Activated B cell treated with CpG ODN at 0.5 μM for 24 hours (primary cell): ENCODE measurements at regions of chr19 and their contacts with region 1.

Region 1: DNA sequence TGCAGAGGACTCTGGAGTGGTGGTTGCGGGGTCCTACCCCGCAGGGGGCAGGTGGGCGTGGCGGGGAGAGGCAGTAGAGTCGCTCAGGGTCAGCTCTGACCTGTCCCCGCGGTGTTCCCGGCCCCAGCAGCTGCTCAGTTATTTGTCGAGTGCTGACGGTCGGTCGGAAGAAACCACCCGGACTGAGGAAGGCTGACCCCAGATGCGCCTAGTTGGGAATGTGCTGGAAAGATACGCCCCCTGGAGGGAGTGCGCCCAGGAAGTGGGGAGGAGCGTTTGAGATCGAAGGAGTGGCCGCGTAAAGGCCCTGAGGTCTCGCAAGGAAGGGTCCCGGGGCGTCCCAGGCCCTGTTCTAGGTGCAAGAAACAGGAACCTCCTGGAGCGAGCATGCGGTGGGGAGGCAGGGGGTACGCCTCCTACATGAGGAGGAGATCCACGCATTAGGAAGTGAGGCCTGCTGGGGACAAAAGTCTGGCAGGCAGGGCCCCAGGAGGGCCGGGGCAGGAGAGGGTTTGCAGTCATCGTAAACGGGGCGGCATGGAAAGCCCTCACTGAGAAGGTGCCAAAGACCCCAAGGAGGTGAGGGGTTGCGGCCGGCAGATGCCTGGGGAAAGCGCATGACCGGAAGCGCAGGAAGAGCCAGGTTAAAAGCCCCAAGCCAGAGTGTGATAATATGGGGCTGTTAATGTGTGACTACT is 9.2 kb downstream of the CCDC8 start:
- DNase-seq: no peak
- ATAC-seq: no peak
- H3K4me3 Mint-ChIP-seq: peak overlapping the region; percentile 45
- H3K27ac Mint-ChIP-seq: no peak overlapping the region
- H3K4me1 Mint-ChIP-seq: peaks cover 15% of the 10 kb centered on the region
- H3K27me3 Mint-ChIP-seq: peaks cover 53% of the 10 kb centered on the region
- CTCF ChIP-seq: no peak

Region 2: GRCh38 chr19:46076951-46077816 is 327.0 kb before region 1 on chr19:
- CTCF ChIA-PET with region 1: no interaction called
- POLR2A ChIA-PET with region 1: no interaction called
- intact Hi-C with region 1: no loop called
- DNase-seq: no peak
- ATAC-seq: no peak
- H3K4me3 Mint-ChIP-seq: no peak overlapping the region
- H3K27ac Mint-ChIP-seq: no peak overlapping the region
- H3K4me1 Mint-ChIP-seq: no peaks in the 10 kb centered on the region
- H3K27me3 Mint-ChIP-seq: peaks cover 68% of the 10 kb centered on the region
- CTCF ChIP-seq: no peak

Region 3: GRCh38 chr19:46254776-46255175 is 149.4 kb before region 1 on chr19:
- CTCF ChIA-PET with region 1: no interaction called
- POLR2A ChIA-PET with region 1: no interaction called
- intact Hi-C with region 1: no loop called
- DNase-seq: no peak
- ATAC-seq: no peak
- H3K4me3 Mint-ChIP-seq: no peak overlapping the region
- H3K27ac Mint-ChIP-seq: no peak overlapping the region
- H3K4me1 Mint-ChIP-seq: no peaks in the 10 kb centered on the region
- H3K27me3 Mint-ChIP-seq: peaks cover 29% of the 10 kb centered on the region
- CTCF ChIP-seq: no peak

Region 4: GRCh38 chr19:46487802-46488445 is 83.7 kb after region 1 on chr19:
- CTCF ChIA-PET with region 1: interaction called, 6 read pairs
- POLR2A ChIA-PET with region 1: no interaction called
- intact Hi-C with region 1: loop called (anchors 1 kb)
- DNase-seq: peak; percentile 69
- ATAC-seq: peak; percentile 69
- H3K4me3 Mint-ChIP-seq: no peak overlapping the region
- H3K27ac Mint-ChIP-seq: no peak overlapping the region
- H3K4me1 Mint-ChIP-seq: peaks cover 24% of the 10 kb centered on the region
- H3K27me3 Mint-ChIP-seq: peaks cover 73% of the 10 kb centered on the region
- CTCF ChIP-seq: peak; percentile 32

Region 5: GRCh38 chr19:46513461-46514236 is 109.4 kb after region 1 on chr19:
- CTCF ChIA-PET with region 1: no interaction called
- POLR2A ChIA-PET with region 1: no interaction called
- intact Hi-C with region 1: loop called (anchors 1 kb)
- DNase-seq: peak; percentile 74
- ATAC-seq: peak; percentile 57
- H3K4me3 Mint-ChIP-seq: no peak overlapping the region
- H3K27ac Mint-ChIP-seq: no peak overlapping the region
- H3K4me1 Mint-ChIP-seq: no peaks in the 10 kb centered on the region
- H3K27me3 Mint-ChIP-seq: peaks cover 24% of the 10 kb centered on the region
- CTCF ChIP-seq: no peak